ENCODE measurements at regions of chr10 and their contacts with region 1.

Region 1: DNA sequence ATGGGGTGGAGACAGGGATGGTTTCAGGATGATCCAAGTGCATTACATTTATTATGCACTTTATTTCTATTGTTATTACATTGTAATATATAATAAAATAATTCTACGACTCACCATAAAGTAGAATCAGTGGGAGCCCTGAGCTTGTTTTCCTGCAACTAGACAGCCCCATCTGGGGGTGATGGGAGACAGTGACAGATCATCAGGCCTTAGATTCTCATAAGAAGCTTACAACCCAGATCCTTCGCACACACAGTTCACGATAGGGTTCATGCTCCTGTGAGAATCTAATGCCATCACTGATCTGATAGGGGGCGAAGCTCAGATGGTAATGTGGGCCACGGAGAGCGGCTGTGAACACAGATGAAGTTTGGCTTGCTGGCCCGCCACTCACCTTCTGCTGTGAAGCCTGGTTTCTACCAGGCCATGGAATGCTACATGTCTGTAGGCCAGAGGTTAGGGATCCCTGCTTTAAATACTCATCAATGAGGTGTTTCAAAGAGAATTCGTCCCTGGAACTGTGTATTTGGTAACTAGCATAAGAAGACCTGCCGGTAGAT is 21.2 kb upstream of the PRKCQ start:
- DNase-seq: peak; percentile 48
- H3K4me3 Mint-ChIP-seq: no peak overlapping the region
- H3K27ac Mint-ChIP-seq: peak overlapping the region; percentile 89
- H3K4me1 Mint-ChIP-seq: peaks cover 62% of the 10 kb centered on the region
- H3K27me3 Mint-ChIP-seq: no peaks in the 10 kb centered on the region

Region 2: DNA sequence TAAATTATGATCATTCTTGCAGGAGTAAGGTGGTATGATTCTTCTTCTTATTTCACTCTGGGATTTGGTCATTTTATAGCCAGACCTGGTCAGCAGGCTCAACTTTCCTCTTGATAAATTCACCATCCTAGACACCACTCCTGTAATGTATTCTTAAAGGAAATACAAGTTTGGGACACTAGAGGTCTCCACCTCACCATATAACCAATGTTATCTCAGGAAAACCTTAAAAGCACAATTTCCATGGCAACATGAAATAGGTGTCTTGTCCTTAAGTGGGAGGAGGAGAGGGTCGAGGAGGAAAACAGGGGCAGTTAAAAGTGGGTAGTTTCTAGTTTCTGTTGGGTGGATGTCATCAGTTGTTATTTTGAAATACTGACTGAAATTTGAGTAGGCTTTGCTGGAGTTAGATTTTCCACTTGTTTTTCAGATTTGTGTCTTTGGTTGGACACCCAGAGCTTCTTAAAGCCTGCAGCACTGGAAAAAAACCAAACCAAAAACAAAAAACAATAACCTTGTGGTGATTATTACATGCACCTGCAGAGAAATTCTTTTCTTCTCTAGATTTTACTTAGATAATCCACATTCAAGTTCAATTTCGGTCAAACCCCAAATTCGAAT is 184.3 kb before region 1 on chr10:
- CTCF ChIA-PET with region 1: interaction called, 4 read pairs
- POLR2A ChIA-PET with region 1: no interaction called
- intact Hi-C with region 1: loop called (anchors 1 kb)
- DNase-seq: no peak
- H3K4me3 Mint-ChIP-seq: no peak overlapping the region
- H3K27ac Mint-ChIP-seq: no peak overlapping the region
- H3K4me1 Mint-ChIP-seq: no peaks in the 10 kb centered on the region
- H3K27me3 Mint-ChIP-seq: no peaks in the 10 kb centered on the region